Prostate gland (tissue), 2 donors: ENCODE measurements at regions of chr12 and their contacts with region 1.

Region 1: DNA sequence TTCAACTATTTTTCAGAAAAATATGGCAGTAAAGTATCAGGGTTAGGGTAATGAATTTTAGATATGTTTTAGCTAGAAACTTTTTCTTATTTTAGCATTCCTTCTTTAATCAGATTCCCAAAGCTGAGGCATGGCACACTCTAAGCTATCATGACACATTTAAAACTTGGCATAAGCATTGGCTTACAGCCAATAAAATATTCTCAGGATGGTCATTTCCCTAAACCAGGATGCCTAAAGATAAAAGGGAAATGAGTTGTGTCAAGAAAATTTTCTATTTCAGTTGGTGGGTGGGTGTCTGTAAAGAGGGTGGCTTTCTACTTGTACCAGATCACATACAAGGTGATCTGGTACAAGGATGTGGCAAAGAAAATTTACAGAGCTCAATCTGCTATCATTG is 47.8 kb downstream of the PEBP1 start:
- DNase-seq: no peak
- H3K4me3 ChIP-seq: no peak overlapping the region
- H3K27ac ChIP-seq: no peak overlapping the region
- H3K4me1 ChIP-seq: no peaks in the 10 kb centered on the region
- H3K27me3 ChIP-seq: no peaks in the 10 kb centered on the region
- CTCF ChIP-seq: no peak
- POLR2A ChIP-seq: no peak

Region 2: GRCh38 chr12:116924558-116925453 is 1258.9 kb before region 1 on chr12:
- intact Hi-C with region 1: no loop called
- DNase-seq: no peak
- H3K4me3 ChIP-seq: no peak overlapping the region
- H3K27ac ChIP-seq: no peak overlapping the region
- H3K4me1 ChIP-seq: no peaks in the 10 kb centered on the region
- H3K27me3 ChIP-seq: no peaks in the 10 kb centered on the region
- CTCF ChIP-seq: no peak
- POLR2A ChIP-seq: no peak

Region 3: DNA sequence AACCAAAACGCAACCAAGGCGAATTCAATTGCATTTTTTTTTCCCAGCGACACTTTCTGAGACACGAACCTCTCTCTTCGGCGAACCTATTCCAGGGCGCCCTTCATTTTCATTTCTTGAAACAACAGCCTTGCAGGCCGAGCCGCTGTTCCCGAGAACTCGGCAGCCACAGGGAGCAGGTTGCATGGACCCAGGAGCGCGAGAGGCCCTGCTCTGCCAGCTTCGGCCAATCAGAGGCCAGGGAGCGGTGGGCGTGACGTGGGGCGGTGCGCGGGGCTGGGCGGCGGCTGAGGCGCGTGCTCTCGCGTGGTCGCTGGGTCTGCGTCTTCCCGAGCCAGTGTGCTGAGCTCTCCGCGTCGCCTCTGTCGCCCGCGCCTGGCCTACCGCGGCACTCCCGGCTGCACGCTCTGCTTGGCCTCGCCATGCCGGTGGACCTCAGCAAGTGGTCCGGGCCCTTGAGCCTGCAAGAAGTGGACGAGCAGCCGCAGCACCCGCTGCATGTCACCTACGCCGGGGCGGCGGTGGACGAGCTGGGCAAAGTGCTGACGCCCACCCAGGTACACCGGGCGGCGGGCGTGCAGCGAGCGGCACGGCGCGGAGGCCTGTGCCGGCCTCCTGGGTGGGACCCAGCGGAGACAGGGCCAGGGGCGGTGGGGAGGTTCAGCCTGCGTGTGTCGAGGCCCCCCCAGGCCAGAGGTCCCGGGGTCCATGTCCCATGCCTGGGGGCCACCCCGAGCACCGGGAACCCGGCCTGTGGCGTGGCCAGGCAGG is 47.7 kb before region 1 on chr12 and contains the start of gene PEBP1:
- intact Hi-C with region 1: loop called (anchors 5 kb)
- DNase-seq: peak; percentile 96
- H3K4me3 ChIP-seq: peak within 1 kb of the TSS; percentile 63 to 84
- H3K27ac ChIP-seq: peak within 1 kb of the TSS; percentile 84 to 86
- H3K4me1 ChIP-seq: peaks cover 5% of the 10 kb centered on the region
- H3K27me3 ChIP-seq: no peaks in the 10 kb centered on the region
- CTCF ChIP-seq: no peak
- POLR2A ChIP-seq: peak; percentile 94
- total RNA-seq, gene PEBP1: 538 to 621 TPM

Region 4: DNA sequence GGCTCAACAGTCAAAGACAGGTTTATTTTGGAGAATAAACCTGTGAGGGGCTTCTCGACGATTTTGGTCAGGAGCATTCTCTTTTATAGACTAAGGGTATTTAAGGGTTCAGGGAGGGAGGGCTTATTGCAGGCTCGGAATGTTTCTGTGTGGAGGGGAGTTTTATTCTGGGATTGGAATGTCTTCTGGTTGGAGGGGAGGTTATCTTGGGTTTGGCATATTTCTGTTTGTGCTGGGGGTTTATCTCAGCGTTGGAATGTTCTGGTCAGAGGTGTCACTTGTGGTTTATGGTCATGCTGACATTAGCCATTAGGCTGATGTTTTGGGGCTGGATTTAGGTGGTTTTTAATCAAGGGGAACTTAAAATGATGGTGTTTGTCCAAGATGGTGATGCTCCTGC is 296.5 kb after region 1 on chr12:
- intact Hi-C with region 1: no loop called
- DNase-seq: no peak
- H3K4me3 ChIP-seq: no peak overlapping the region
- H3K27ac ChIP-seq: no peak overlapping the region
- H3K4me1 ChIP-seq: no peaks in the 10 kb centered on the region
- H3K27me3 ChIP-seq: no peaks in the 10 kb centered on the region
- CTCF ChIP-seq: no peak
- POLR2A ChIP-seq: no peak

Region 5: GRCh38 chr12:119036878-119037825 is 853.4 kb after region 1 on chr12:
- intact Hi-C with region 1: no loop called
- DNase-seq: no peak
- H3K4me3 ChIP-seq: no peak overlapping the region
- H3K27ac ChIP-seq: no peak overlapping the region
- H3K4me1 ChIP-seq: no peaks in the 10 kb centered on the region
- H3K27me3 ChIP-seq: no peaks in the 10 kb centered on the region
- CTCF ChIP-seq: peak; percentile 12 to 51 (median 25)
- POLR2A ChIP-seq: no peak